ENCODE measurements at regions of chr10 and their contacts with region 1.

Region 1: GRCh38 chr10:101968940-101969321 is 87.0 kb downstream of the ARMH3 start:
- DNase-seq: peak; percentile 76
- ATAC-seq: peak; percentile 72
- H3K4me3 ChIP-seq: no peak overlapping the region
- H3K27ac ChIP-seq: peak overlapping the region; percentile 99
- H3K4me1 ChIP-seq: peaks cover 80% of the 10 kb centered on the region
- H3K27me3 ChIP-seq: no peaks in the 10 kb centered on the region
- CTCF ChIP-seq: no peak
- EP300 ChIP-seq: peak in 1 of 2 experiments; percentile 74
- POLR2A ChIP-seq: no peak
- RAD21 ChIP-seq: no peak

Region 2: DNA sequence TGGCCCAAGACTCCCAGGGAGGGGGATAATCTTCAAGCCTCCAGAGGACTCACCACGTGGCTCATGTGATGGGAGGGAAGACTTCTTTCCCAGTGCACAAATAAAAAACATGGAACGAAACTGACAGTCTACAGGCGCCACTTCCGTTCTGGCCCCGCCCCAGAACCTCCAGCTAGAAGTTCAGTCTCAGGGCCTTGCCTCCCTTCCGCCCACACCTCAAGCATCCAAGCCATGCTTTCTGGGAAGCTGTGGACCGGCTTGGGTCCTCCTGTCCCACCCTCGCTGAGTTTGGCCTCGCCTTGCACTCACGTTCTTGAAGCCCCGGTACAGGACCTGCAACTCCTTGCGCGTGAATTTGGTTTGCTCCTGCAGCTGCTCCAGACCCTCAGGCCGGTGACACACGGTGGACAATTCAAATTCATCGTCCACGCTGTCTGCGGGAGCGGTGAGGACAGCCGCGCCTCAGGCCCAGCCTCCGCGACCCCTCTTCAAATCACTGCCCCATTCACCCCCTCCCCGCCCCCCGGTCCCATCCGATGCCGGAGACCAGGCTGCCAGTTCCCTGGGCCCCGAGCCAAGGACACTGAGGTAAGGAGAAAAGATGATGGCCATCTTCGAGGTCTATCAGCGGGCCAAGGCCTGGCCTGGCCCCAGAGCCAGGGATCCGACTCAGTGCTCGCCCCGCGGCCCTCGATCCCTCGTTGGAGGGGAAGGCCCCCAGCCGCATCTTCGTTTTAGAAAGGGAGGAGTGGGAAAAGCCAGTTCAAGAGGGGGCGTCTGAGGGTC is 140.0 kb before region 1 on chr10:
- CTCF ChIA-PET with region 1: no interaction called
- POLR2A ChIA-PET with region 1: no interaction called
- RAD21 ChIA-PET with region 1: no interaction called
- SMC1A ChIA-PET with region 1: no interaction called
- in situ Hi-C with region 1: no loop called
- intact Hi-C with region 1: no loop called
- DNase-seq: no peak
- ATAC-seq: no peak
- H3K4me3 ChIP-seq: no peak overlapping the region
- H3K27ac ChIP-seq: no peak overlapping the region
- H3K4me1 ChIP-seq: peaks cover 19% of the 10 kb centered on the region
- H3K27me3 ChIP-seq: no peaks in the 10 kb centered on the region
- CTCF ChIP-seq: no peak
- EP300 ChIP-seq: no peak
- POLR2A ChIP-seq: no peak
- RAD21 ChIP-seq: no peak

Region 3: GRCh38 chr10:101897633-101898032 is 71.3 kb before region 1 on chr10:
- CTCF ChIA-PET with region 1: interaction called, 25 read pairs
- POLR2A ChIA-PET with region 1: interaction called, 35 read pairs
- RAD21 ChIA-PET with region 1: interaction called, 68 read pairs
- SMC1A ChIA-PET with region 1: interaction called, 100 read pairs
- in situ Hi-C with region 1: no loop called
- intact Hi-C with region 1: loop called (anchors 2 kb)
- DNase-seq: no peak
- ATAC-seq: no peak
- H3K4me3 ChIP-seq: no peak overlapping the region
- H3K27ac ChIP-seq: peak overlapping the region; percentile 29
- H3K4me1 ChIP-seq: peaks cover 44% of the 10 kb centered on the region
- H3K27me3 ChIP-seq: no peaks in the 10 kb centered on the region
- CTCF ChIP-seq: no peak
- EP300 ChIP-seq: no peak
- POLR2A ChIP-seq: no peak
- RAD21 ChIP-seq: no peak

Region 4: DNA sequence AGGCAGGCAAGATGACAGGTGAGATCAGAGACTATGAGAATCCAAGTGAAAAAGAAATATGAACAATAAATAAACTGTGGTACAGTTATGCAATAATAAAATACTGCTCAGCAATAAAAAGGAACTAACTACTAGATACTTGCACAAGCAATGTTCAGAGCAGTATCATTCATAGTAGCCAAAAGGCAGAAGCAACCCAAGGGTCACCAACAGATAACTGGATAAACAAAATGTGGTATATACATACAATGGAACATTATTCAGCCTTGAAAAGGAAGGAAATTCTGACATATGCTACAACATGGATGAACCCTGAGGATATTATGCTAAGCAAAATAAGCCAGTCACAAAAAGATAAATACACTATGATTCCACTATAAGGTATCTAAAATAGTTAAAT is 48.4 kb before region 1 on chr10:
- CTCF ChIA-PET with region 1: interaction called, 3 read pairs
- POLR2A ChIA-PET with region 1: interaction called, 14 read pairs
- RAD21 ChIA-PET with region 1: interaction called, 6 read pairs
- SMC1A ChIA-PET with region 1: interaction called, 8 read pairs
- in situ Hi-C with region 1: no loop called
- intact Hi-C with region 1: no loop called
- DNase-seq: no peak
- ATAC-seq: no peak
- H3K4me3 ChIP-seq: no peak overlapping the region
- H3K27ac ChIP-seq: no peak overlapping the region
- H3K4me1 ChIP-seq: peaks cover 3% of the 10 kb centered on the region; the same call in 1 of the 2 replicates
- H3K27me3 ChIP-seq: no peaks in the 10 kb centered on the region
- CTCF ChIP-seq: no peak
- EP300 ChIP-seq: no peak
- POLR2A ChIP-seq: no peak
- RAD21 ChIP-seq: no peak

Region 5: GRCh38 chr10:101986625-101986973 is 17.7 kb after region 1 on chr10:
- CTCF ChIA-PET with region 1: interaction called, 6 read pairs
- POLR2A ChIA-PET with region 1: interaction called, 7 read pairs
- RAD21 ChIA-PET with region 1: interaction called, 7 read pairs
- SMC1A ChIA-PET with region 1: interaction called, 13 read pairs
- in situ Hi-C with region 1: no loop called
- intact Hi-C with region 1: no loop called
- DNase-seq: no peak
- ATAC-seq: peak; percentile 94
- H3K4me3 ChIP-seq: peak overlapping the region; percentile 25; the same call in 1 of the 2 replicates
- H3K27ac ChIP-seq: peak overlapping the region; percentile 88
- H3K4me1 ChIP-seq: peaks cover 16% of the 10 kb centered on the region
- H3K27me3 ChIP-seq: no peaks in the 10 kb centered on the region
- CTCF ChIP-seq: no peak
- EP300 ChIP-seq: no peak
- POLR2A ChIP-seq: no peak
- RAD21 ChIP-seq: no peak

Region 6: DNA sequence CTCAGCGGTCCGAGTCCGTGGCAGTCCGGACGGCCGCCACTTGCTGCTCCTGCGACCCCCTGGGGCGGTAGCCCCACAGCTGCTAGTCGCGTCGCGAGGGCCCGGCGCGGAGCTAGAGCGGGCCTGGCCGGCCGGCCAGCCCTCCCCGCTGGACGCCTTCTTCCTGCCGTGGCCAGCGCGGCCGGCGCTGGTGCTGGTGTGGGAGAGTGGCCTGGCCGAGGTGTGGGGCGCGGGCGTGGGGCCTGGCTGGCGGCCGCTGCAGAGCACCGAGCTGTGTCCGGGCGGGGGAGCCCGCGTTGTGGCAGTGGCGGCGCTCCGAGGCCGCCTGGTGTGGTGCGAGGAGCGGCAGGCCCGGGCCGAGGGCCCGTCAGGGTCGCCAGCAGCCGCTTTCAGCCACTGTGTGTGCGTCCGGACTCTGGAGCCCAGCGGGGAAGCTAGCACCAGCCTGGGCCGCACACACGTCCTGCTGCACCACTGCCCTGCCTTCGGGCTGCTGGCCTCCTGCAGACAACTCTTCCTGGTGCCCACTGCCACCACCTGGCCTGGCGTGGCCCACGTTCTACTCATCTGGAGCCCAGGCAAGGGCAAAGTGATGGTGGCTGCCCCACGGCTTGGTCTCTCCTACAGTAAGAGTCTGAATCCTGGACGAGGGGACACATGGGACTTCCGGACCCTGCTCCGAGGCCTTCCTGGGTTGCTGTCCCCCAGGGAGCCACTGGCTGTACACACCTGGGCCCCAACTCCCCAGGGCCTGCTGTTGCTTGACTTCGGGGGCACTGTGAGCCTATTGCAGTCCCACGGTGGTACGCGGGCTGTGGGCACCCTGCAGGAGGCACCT is 96.8 kb after region 1 on chr10:
- CTCF ChIA-PET with region 1: no interaction called
- POLR2A ChIA-PET with region 1: no interaction called
- RAD21 ChIA-PET with region 1: no interaction called
- SMC1A ChIA-PET with region 1: no interaction called
- in situ Hi-C with region 1: no loop called
- intact Hi-C with region 1: no loop called
- DNase-seq: no peak
- ATAC-seq: peak; percentile 57
- H3K4me3 ChIP-seq: peak overlapping the region; percentile 90
- H3K27ac ChIP-seq: peak overlapping the region; percentile 73
- H3K4me1 ChIP-seq: peaks cover 7% of the 10 kb centered on the region
- H3K27me3 ChIP-seq: no peaks in the 10 kb centered on the region
- CTCF ChIP-seq: peak in 1 of 3 experiments; percentile 11; a peak in 1 of 6 replicates
- EP300 ChIP-seq: no peak
- POLR2A ChIP-seq: no peak
- RAD21 ChIP-seq: no peak

Measured in GM12878 (cell line).